ENCODE measurements at regions of chr4 and their contacts with region 1.

Region 1: DNA sequence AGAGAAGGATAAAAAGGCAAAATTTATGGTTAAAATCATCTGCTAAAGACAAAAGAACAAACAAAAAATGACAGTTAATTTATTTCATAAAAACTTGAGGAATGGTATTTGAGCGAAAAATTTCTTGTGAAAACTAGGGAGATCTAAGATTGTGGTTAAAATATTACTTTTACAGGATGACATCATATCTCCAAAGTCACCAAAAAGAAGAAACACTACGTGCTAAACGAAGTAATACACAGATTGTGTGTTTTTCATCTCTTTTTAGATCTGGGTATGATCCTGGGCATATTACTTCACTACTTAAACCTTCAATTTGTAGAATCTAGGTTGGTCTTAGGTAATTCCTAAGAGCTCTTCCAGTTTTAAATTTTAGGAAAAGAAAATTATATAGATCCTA is 107.7 kb downstream of the CAMK2D start:
- DNase-seq: no peak
- ATAC-seq: no peak
- H3K4me3 Mint-ChIP-seq: no peak overlapping the region
- H3K27ac Mint-ChIP-seq: no peak overlapping the region
- H3K4me1 Mint-ChIP-seq: peaks cover 36% of the 10 kb centered on the region
- H3K27me3 Mint-ChIP-seq: no peaks in the 10 kb centered on the region

Region 2: DNA sequence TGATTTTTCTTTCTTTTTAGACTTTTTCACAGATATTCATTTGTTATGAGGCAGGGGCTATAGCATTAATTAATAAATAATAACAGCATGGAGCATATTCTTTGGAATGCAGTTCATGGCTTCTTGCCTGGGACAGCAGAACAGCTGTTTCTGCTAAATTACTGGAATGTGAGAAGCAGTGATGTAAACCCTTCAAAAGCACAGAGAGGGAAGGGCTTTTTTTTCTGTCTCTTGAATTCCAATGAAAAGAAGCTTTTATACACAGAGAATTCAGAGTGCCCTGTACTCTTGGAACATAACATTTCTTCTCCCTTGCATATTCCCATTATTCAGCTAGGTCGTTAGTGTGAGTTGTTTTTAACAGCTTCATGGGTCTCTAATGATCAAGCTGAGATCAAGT is 632.9 kb before region 1 on chr4:
- CTCF ChIA-PET with region 1: no interaction called
- POLR2A ChIA-PET with region 1: no interaction called
- intact Hi-C with region 1: no loop called
- DNase-seq: no peak
- ATAC-seq: no peak
- H3K4me3 Mint-ChIP-seq: no peak overlapping the region
- H3K27ac Mint-ChIP-seq: no peak overlapping the region
- H3K4me1 Mint-ChIP-seq: no peaks in the 10 kb centered on the region
- H3K27me3 Mint-ChIP-seq: peaks cover 1% of the 10 kb centered on the region

Region 3: DNA sequence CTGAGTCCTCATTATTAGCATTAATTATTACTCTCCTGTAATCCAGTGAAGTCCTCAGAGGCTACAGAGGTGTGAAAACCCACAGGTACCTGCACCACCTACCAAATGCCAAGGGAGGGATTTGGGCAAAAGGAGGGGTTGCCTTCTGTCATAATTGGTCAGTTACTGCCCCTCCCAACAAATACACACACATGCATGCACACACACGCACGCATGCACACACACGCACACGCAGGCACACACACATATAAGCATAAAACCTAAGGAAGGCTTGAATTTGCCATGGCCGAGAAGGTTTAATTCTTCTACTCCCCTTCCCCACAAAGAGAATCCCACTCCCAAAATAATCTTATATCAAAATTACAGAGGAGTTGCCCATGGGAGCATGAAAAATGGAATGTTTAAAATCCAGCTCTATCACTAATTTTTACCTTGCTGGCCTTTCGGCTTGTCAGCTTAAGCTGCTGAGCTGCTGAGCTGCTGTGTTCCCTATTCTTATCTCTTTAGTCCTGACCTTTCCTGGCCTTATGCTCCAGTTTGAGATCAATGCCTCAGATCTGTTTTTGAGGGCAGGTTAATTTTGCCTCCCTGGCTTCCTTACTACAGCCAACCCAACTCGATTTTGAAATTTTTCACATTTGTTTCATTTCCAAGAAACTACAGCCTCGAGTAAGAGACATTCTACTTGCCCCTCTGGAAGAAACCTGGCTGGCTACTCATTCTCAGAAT is 12.7 kb after region 1 on chr4:
- CTCF ChIA-PET with region 1: interaction called, 12 read pairs
- POLR2A ChIA-PET with region 1: no interaction called
- intact Hi-C with region 1: no loop called
- DNase-seq: no peak
- ATAC-seq: no peak
- H3K4me3 Mint-ChIP-seq: no peak overlapping the region
- H3K27ac Mint-ChIP-seq: no peak overlapping the region
- H3K4me1 Mint-ChIP-seq: peaks cover 14% of the 10 kb centered on the region
- H3K27me3 Mint-ChIP-seq: no peaks in the 10 kb centered on the region